ENCODE measurements at regions of chr3 and their contacts with region 1.

Region 1: GRCh38 chr3:122754929-122755328 is 38.7 kb downstream of the HSPBAP1 start:
- DNase-seq: peak in 3 of 9 experiments; percentile 8 to 61 (median 52)
- ATAC-seq: peak; percentile 73
- H3K4me3 ChIP-seq: no peak overlapping the region
- H3K4me3 Mint-ChIP-seq: no peak overlapping the region
- H3K27ac ChIP-seq: no peak overlapping the region
- H3K27ac Mint-ChIP-seq: no peak overlapping the region
- H3K4me1 ChIP-seq: no peaks in the 10 kb centered on the region
- H3K4me1 Mint-ChIP-seq: peaks cover 3% of the 10 kb centered on the region
- H3K27me3 ChIP-seq: no peaks in the 10 kb centered on the region
- H3K27me3 Mint-ChIP-seq: no peaks in the 10 kb centered on the region
- CTCF ChIP-seq: peak; percentile 75

Region 2: GRCh38 chr3:122864498-122864897 is 109.6 kb after region 1 on chr3:
- CTCF ChIA-PET with region 1: no interaction called
- POLR2A ChIA-PET with region 1: no interaction called
- intact Hi-C with region 1: loop called (anchors 10 kb)
- DNase-seq: no peak
- ATAC-seq: no peak
- H3K4me3 ChIP-seq: no peak overlapping the region
- H3K4me3 Mint-ChIP-seq: no peak overlapping the region
- H3K27ac ChIP-seq: no peak overlapping the region
- H3K27ac Mint-ChIP-seq: no peak overlapping the region
- H3K4me1 ChIP-seq: no peaks in the 10 kb centered on the region
- H3K4me1 Mint-ChIP-seq: no peaks in the 10 kb centered on the region
- H3K27me3 ChIP-seq: no peaks in the 10 kb centered on the region
- H3K27me3 Mint-ChIP-seq: no peaks in the 10 kb centered on the region
- CTCF ChIP-seq: no peak

Region 3: GRCh38 chr3:122942937-122943827 is 188.3 kb after region 1 on chr3:
- CTCF ChIA-PET with region 1: interaction called, 4 read pairs
- POLR2A ChIA-PET with region 1: no interaction called
- intact Hi-C with region 1: loop called in 1 of 2 experiments (anchors 10 kb)
- DNase-seq: peak in 3 of 9 experiments; percentile 11 to 18 (median 14)
- ATAC-seq: no peak
- H3K4me3 ChIP-seq: no peak overlapping the region
- H3K4me3 Mint-ChIP-seq: no peak overlapping the region
- H3K27ac ChIP-seq: no peak overlapping the region
- H3K27ac Mint-ChIP-seq: no peak overlapping the region
- H3K4me1 ChIP-seq: peaks cover 15% of the 10 kb centered on the region
- H3K4me1 Mint-ChIP-seq: peaks cover 14% of the 10 kb centered on the region
- H3K27me3 ChIP-seq: peaks cover 0 to 9% of the 10 kb centered on the region in 2 experiments
- H3K27me3 Mint-ChIP-seq: peaks cover 6% of the 10 kb centered on the region
- CTCF ChIP-seq: peak; percentile 54

Region 4: DNA sequence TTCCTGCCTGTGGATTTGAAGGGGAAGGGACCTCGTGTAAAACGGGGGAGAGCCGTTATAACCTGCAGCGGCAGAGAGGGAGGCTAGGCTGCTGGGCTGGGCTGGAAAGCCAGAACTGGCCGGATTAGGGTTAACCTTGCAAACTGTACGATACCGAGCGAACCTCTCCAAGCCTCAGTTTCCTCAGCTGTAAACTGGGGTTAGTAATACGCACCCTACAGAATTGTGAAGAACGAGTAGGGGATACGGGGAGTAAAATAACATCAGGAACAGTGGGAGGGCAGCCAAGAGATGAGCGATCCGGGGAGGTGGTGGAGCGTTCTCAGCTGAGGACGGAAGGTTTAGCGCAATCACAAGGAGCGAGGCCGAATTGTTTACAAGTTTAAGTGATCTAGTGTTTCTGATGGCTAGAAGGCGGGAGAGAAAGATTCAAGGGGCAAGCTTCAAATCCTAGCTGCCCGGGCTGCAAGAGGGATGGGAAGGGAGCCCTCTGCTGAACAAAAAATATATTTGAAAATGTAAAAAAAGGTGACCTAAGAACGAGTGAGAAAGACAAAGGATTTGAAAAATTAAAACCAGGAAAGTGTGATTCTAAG is 273.4 kb after region 1 on chr3:
- CTCF ChIA-PET with region 1: interaction called, 17 read pairs
- POLR2A ChIA-PET with region 1: interaction called, 4 read pairs
- intact Hi-C with region 1: loop called in 1 of 2 experiments (anchors 2 kb)
- DNase-seq: peak in 3 of 9 experiments; percentile 13 to 54 (median 45)
- ATAC-seq: no peak
- H3K4me3 ChIP-seq: peak overlapping the region; percentile 46 to 49
- H3K4me3 Mint-ChIP-seq: peak overlapping the region; percentile 76
- H3K27ac ChIP-seq: no peak overlapping the region
- H3K27ac Mint-ChIP-seq: no peak overlapping the region
- H3K4me1 ChIP-seq: peaks cover 7% of the 10 kb centered on the region
- H3K4me1 Mint-ChIP-seq: peaks cover 22% of the 10 kb centered on the region
- H3K27me3 ChIP-seq: peaks cover 16 to 28% of the 10 kb centered on the region in 2 experiments
- H3K27me3 Mint-ChIP-seq: peaks cover 56% of the 10 kb centered on the region
- CTCF ChIP-seq: peak; percentile 17

Region 5: DNA sequence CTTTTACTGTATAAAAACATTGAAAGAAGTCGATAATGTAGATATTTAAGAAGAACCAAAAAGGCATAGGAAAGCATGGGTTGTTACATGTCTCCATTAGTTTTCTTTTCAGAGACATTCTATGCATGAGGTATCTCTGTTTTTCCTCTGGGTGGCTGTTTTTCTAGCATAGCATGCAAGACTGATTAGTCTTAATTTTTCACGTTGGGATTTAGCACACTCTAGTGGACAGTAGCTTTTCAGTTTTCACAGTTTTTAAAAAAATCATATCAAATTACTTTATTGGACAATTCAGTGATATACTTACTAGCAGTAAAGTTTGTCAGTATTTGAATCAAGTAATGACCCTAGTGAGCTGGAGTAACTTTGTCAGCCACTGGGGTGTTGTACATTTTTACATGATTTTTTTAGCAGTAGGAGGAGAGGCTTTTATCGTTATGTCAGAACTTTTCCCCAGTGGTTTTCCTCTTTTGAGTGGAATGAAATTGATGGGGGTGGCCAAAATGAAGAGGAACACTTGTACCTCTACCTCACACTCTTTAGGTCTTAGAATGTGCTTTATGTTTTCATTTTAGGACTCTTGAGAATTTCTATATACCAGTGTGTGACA is 504.0 kb after region 1 on chr3:
- CTCF ChIA-PET with region 1: no interaction called
- POLR2A ChIA-PET with region 1: no interaction called
- intact Hi-C with region 1: loop called (anchors 5 kb)
- DNase-seq: peak in 2 of 9 experiments; percentile 34 to 47
- ATAC-seq: peak; percentile 54
- H3K4me3 ChIP-seq: no peak overlapping the region
- H3K4me3 Mint-ChIP-seq: no peak overlapping the region
- H3K27ac ChIP-seq: no peak overlapping the region
- H3K27ac Mint-ChIP-seq: peak overlapping the region; percentile 42
- H3K4me1 ChIP-seq: no peaks in the 10 kb centered on the region
- H3K4me1 Mint-ChIP-seq: no peaks in the 10 kb centered on the region
- H3K27me3 ChIP-seq: no peaks in the 10 kb centered on the region
- H3K27me3 Mint-ChIP-seq: no peaks in the 10 kb centered on the region
- CTCF ChIP-seq: peak; percentile 29